ENCODE measurements at regions of chr9 and their contacts with region 1.

Region 1: DNA sequence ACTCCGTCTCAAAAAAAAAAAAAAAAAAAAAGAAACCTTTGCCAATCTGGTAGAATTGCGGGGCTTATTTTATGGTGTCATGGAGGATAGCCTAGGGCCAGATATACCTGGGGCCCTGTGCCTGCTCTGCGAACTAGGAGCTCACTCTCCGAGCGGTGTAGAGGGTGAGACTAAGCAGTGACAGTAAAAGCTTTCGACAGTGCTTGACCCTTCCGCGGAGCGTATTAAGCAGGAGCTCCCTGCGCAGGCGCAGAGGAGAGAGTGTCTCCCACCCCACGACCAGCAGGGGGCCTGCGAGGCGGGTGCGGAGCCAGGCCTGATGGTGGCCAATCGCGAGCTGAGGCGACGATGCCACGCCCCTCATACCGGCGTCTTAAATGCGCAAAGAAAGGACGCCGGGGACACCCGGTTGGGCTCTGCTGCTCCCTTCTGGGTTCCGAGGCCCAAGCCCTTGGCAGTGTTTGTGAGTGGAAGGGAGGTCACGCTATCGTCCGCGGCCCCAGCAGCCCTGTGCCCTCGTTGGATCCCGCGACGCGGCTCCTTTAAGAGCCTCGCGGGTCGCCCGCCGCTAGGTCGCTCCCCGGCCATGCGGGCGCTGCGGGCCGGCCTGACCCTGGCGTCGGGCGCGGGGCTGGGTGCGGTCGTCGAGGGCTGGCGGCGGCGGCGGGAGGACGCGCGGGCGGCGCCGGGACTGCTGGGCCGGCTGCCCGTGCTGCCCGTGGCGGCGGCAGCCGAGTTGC is at the start of gene ENDOG:
- DNase-seq: peak; percentile 98
- ATAC-seq: peak; percentile 95
- H3K4me3 Mint-ChIP-seq: peak within 1 kb of the TSS; percentile 87
- H3K27ac Mint-ChIP-seq: peak within 1 kb of the TSS; percentile 87
- H3K4me1 Mint-ChIP-seq: peaks cover 15% of the 10 kb centered on the region
- H3K27me3 Mint-ChIP-seq: no peaks in the 10 kb centered on the region
- CTCF ChIP-seq: no peak
- total RNA-seq, gene ENDOG: 14.6 and 16.9 TPM in 2 replicates

Region 2: GRCh38 chr9:128512820-128513219 is 305.4 kb before region 1 on chr9:
- CTCF ChIA-PET with region 1: no interaction called
- POLR2A ChIA-PET with region 1: no interaction called
- intact Hi-C with region 1: no loop called
- DNase-seq: no peak
- ATAC-seq: no peak
- H3K4me3 Mint-ChIP-seq: no peak overlapping the region
- H3K27ac Mint-ChIP-seq: no peak overlapping the region
- H3K4me1 Mint-ChIP-seq: peaks cover 12% of the 10 kb centered on the region
- H3K27me3 Mint-ChIP-seq: no peaks in the 10 kb centered on the region
- CTCF ChIP-seq: no peak

Region 3: GRCh38 chr9:128702445-128702948 is 115.8 kb before region 1 on chr9 and contains the start of gene PKN3:
- CTCF ChIA-PET with region 1: interaction called, 5 read pairs
- POLR2A ChIA-PET with region 1: no interaction called
- intact Hi-C with region 1: loop called (anchors 5 kb)
- DNase-seq: peak; percentile 91
- ATAC-seq: peak; percentile 85
- H3K4me3 Mint-ChIP-seq: peak within 1 kb of the TSS; percentile 85
- H3K27ac Mint-ChIP-seq: peak within 1 kb of the TSS; percentile 24
- H3K4me1 Mint-ChIP-seq: peaks cover 13% of the 10 kb centered on the region
- H3K27me3 Mint-ChIP-seq: no peaks in the 10 kb centered on the region
- CTCF ChIP-seq: peak; percentile 57
- total RNA-seq, gene PKN3: 16.9 and 17.4 TPM in 2 replicates

Region 4: DNA sequence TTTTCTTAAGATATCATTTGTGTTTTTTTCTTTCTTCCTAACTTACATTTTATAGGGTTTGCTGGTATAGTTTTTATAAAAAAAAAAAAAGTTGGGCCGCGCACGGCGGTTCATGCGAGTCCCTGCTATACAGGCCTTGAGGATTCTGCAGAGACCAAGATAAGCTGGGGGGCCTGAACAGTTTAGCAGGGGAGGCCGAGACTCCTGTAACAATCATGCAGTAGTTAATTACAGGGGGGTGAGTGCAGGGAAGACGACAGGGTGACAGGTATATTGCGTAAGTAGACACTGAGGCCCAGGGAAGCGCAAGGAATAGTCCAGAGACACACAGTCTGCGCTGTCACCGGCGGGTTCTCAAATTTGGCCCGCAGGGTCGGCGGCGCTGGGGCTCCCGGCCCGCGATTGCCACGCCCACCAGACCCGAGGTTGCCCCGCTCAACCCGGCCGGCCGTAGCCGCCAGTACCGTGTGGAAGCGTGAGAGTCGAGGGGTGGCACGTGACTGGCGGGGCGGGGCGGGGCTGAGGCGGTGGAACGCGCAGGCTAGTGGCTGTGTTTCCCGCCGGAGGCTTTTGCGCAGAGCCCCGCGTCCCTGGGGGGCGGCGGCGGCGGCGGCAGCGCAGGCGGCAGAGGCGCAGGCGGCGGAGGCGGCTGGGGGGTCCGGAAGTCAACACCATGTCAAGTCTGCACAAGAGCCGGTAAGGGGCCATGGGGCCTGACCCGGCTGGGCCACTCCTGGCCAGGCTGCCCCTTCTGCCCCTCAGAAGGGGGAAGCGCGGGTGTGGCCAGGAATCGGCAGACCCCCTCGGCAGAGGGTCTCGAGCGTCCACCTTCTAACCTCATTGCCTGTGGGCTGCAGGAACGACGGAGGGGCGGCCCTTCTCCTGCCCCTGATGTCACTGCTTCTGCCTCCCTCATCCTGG is 31.3 kb before region 1 on chr9 and contains the start of gene TBC1D13:
- CTCF ChIA-PET with region 1: interaction called, 9 read pairs
- POLR2A ChIA-PET with region 1: no interaction called
- intact Hi-C with region 1: loop called (anchors 1 kb)
- DNase-seq: peak; percentile 96
- ATAC-seq: peak; percentile 95
- H3K4me3 Mint-ChIP-seq: peak within 1 kb of the TSS; percentile 95
- H3K27ac Mint-ChIP-seq: peak within 1 kb of the TSS; percentile 85
- H3K4me1 Mint-ChIP-seq: peaks cover 17% of the 10 kb centered on the region
- H3K27me3 Mint-ChIP-seq: no peaks in the 10 kb centered on the region
- CTCF ChIP-seq: no peak
- total RNA-seq, gene TBC1D13: 21.5 and 26.4 TPM in 2 replicates

Region 5: GRCh38 chr9:128863647-128864046 is 45.4 kb after region 1 on chr9:
- CTCF ChIA-PET with region 1: interaction called, 10 read pairs
- POLR2A ChIA-PET with region 1: interaction called, 4 read pairs
- intact Hi-C with region 1: no loop called
- DNase-seq: peak; percentile 80
- ATAC-seq: peak; percentile 99
- H3K4me3 Mint-ChIP-seq: no peak overlapping the region
- H3K27ac Mint-ChIP-seq: no peak overlapping the region
- H3K4me1 Mint-ChIP-seq: peaks cover 6% of the 10 kb centered on the region
- H3K27me3 Mint-ChIP-seq: no peaks in the 10 kb centered on the region
- CTCF ChIP-seq: peak; percentile 60

Measured in activated B cell treated with CpG ODN at 0.5 μM for 24 hours (primary cell).